Caco-2 (cell line): ENCODE measurements at regions of chr2 and their contacts with region 1.

Region 1: DNA sequence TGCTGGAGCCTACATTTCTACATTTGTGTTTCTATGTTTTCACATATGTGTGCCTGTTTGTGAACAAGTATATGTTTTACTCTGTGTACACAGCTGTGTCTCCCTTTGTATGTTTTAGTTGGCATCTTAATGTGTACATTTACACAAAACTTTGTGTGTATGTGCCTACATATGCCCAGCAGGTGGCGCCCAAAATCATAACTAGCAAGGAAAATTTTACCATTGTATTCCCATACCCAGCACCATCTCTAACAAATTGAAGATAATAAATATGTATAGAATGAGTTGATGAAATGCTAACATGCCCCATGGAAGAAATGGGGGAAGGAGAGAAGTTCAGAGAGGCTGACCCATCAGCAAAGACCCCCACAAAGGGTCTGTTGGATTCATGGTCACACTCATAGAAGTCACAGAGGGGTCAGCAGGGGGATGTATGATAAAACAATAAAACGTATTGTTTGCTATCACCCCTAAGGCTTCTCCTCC is 48.1 kb downstream of the PKDCC start:
- DNase-seq: peak; percentile 74
- H3K4me3 ChIP-seq: no peak overlapping the region
- H3K4me3 Mint-ChIP-seq: no peak overlapping the region
- H3K27ac Mint-ChIP-seq: no peak overlapping the region
- H3K4me1 ChIP-seq: peaks cover 36% of the 10 kb centered on the region
- H3K4me1 Mint-ChIP-seq: peaks cover 43% of the 10 kb centered on the region
- H3K27me3 ChIP-seq: no peaks in the 10 kb centered on the region
- H3K27me3 Mint-ChIP-seq: no peaks in the 10 kb centered on the region
- CTCF ChIP-seq: peak; percentile 77 to 91

Region 2: DNA sequence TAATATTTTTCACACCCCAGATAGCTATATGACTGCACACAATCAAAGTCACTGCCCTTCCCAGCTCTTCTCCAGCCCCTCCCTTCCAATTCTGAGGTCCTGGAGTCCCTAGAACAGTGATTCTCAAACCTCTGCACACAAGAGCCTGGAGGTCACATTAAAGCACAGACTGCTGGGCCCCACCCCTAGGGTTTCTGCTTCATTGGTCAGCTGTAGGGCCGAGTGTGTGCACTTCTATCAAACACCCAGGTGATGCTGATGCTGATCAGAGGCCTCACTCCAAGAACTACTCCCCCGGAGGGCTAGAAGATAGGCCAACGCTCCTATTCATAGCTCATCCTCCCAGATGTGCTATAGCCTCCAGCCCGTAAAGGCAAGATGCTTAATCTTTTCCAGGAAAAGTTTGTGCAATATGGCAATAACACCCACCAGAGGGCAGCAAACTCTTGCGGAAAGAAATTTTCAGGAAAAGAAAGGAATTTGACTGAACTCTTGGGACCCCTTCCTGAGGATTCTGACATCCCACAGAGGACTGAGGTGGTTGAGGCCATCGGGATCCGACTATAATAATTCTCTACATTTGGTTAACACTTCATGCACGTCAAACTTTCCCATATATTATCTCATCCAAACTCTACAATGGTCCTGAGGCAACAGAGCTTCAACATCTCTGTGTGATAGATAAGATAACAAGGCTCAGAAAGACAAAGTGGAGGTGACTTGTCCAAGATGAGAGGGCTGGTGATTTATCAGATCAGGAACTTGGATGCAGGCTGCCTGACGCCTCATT is 242.3 kb before region 1 on chr2:
- CTCF ChIA-PET with region 1: interaction called, 15 read pairs
- POLR2A ChIA-PET with region 1: no interaction called
- intact Hi-C with region 1: no loop called
- DNase-seq: peak; percentile 70 to 78
- H3K4me3 ChIP-seq: no peak overlapping the region
- H3K4me3 Mint-ChIP-seq: no peak overlapping the region
- H3K27ac Mint-ChIP-seq: peak overlapping the region; percentile 8
- H3K4me1 ChIP-seq: peaks cover 15% of the 10 kb centered on the region
- H3K4me1 Mint-ChIP-seq: peaks cover 2% of the 10 kb centered on the region
- H3K27me3 ChIP-seq: no peaks in the 10 kb centered on the region
- H3K27me3 Mint-ChIP-seq: no peaks in the 10 kb centered on the region
- CTCF ChIP-seq: peak; percentile 82 to 94

Region 3: GRCh38 chr2:42153944-42154581 is 58.1 kb after region 1 on chr2:
- CTCF ChIA-PET with region 1: no interaction called
- POLR2A ChIA-PET with region 1: no interaction called
- intact Hi-C with region 1: no loop called
- DNase-seq: no peak
- H3K4me3 ChIP-seq: no peak overlapping the region
- H3K4me3 Mint-ChIP-seq: no peak overlapping the region
- H3K27ac Mint-ChIP-seq: no peak overlapping the region
- H3K4me1 ChIP-seq: 0 out of 2 replicates have a peak, but pooled peaks cover 4% of the 10 kb centered on the region
- H3K4me1 Mint-ChIP-seq: no peaks in the 10 kb centered on the region
- H3K27me3 ChIP-seq: no peaks in the 10 kb centered on the region; the same call in 1 of the 2 replicates
- H3K27me3 Mint-ChIP-seq: no peaks in the 10 kb centered on the region
- CTCF ChIP-seq: no peak

Region 4: DNA sequence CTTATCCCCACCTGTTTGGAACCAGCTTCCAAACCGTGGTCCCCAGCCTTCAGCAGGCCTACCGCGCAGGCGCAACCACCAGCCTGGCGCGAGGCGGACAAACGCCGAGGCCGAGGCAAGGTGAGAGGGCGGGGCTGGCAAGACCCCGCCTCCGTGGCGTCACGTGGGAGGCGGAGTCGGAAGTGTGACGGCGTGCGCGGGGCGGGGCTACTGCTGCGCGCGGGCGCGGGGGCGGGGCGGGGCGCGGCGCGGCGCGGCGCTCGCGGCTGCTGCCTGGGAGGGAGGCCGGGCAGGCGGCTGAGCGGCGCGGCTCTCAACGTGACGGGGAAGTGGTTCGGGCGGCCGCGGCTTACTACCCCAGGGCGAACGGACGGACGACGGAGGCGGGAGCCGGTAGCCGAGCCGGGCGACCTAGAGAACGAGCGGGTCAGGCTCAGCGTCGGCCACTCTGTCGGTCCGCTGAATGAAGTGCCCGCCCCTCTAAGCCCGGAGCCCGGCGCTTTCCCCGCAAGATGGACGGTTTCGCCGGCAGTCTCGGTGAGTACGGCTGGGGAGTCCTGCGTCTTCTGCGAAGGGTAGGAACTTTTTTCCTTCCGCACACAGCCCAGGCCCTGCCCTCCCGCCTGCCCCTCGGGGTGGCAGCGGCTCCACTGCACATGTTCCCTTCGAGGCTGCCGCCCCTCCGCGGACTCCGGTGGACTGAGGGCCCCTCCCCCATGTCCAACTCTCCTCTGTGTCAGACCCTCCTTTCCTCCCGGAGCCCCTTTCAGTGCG is 73.3 kb after region 1 on chr2 and contains the start of gene EML4:
- CTCF ChIA-PET with region 1: no interaction called
- POLR2A ChIA-PET with region 1: no interaction called
- intact Hi-C with region 1: loop called (anchors 1 kb)
- DNase-seq: peak; percentile 94 to 97
- H3K4me3 ChIP-seq: peak within 1 kb of the TSS; percentile 89
- H3K4me3 Mint-ChIP-seq: no peak within 1 kb of the TSS
- H3K27ac Mint-ChIP-seq: peak within 1 kb of the TSS; percentile 39
- H3K4me1 ChIP-seq: peaks cover 29% of the 10 kb centered on the region
- H3K4me1 Mint-ChIP-seq: peaks cover 24% of the 10 kb centered on the region
- H3K27me3 ChIP-seq: no peaks in the 10 kb centered on the region
- H3K27me3 Mint-ChIP-seq: no peaks in the 10 kb centered on the region
- CTCF ChIP-seq: no peak
- total RNA-seq, gene EML4: 122 and 125 TPM in 2 replicates

Region 5: DNA sequence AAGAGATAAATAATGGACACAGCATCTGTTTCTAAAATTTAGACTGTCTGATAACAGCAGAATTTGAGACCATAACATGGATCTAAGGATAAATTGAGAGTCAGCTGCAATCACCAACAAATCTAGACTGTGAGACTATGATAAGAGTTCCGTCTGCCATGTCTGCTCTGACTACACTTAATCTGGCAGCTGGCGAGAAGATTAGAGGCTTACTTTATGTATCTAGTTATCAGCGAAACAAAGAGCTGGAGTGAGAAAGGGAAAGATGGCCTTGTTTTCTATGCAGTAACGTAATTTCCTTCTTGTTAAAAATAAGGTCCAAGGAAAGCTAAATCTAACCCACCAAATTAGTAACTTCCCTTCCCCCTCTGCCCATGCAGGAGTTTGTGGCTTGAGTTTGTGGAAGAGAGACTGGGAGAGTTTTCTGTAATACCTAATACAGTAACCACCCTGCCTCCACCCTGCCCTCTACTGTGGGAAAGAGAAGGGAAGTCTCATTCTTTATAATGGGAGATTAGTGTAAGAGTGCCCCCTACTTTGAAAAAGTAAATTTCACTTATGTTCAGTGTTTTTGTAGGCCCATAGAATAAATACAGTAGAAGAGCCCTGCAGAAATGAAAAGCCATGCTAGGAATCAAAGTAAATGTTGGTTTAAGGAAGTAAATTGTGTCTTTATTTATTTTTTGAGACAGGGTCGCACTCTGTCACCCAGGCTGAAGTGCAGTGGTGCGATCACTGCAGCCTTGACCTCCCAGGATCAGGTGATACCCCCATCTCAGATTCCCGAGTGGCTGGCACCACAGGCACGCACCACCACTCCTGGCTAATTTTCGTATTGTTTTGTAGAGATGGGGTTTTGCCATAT is 100.7 kb after region 1 on chr2:
- CTCF ChIA-PET with region 1: interaction called, 8 read pairs
- POLR2A ChIA-PET with region 1: no interaction called
- intact Hi-C with region 1: loop called (anchors 1 kb)
- DNase-seq: peak; percentile 68 to 77
- H3K4me3 ChIP-seq: no peak overlapping the region
- H3K4me3 Mint-ChIP-seq: peak overlapping the region; percentile 7
- H3K27ac Mint-ChIP-seq: peak overlapping the region; percentile 10
- H3K4me1 ChIP-seq: peaks cover 51% of the 10 kb centered on the region
- H3K4me1 Mint-ChIP-seq: peaks cover 56% of the 10 kb centered on the region
- H3K27me3 ChIP-seq: no peaks in the 10 kb centered on the region
- H3K27me3 Mint-ChIP-seq: no peaks in the 10 kb centered on the region
- CTCF ChIP-seq: peak; percentile 65 to 85

Region 6: DNA sequence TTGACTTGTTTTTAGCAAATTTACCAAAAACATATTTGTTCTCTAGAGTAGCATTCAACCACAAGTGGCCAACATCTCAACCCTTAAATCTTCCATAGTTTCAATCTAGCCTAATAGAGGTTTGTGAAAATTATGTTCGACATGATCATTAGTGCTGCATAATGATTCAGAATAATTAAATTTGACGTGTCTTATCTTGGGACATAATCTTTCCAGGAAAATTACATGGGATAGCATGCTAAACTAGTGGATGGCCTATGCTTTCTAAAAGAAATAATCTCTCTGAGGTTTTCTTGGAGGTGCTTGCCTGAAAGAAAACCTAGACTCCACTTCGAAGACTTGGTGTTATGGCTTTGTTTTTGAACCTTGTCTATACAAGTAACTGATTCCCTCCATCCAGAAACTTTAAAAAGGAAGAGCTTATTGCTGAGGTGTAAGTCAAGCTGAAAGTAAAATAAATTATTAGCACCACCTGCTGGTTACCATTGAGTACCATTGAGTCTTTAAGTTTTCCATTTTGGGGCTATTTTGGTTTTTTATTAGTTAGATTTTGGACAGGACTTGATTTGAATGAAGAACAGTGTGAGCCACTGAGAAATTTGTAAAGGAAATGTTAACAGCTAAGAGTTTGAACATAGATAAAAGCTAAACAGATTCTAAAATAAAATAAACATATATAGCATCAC is 232.3 kb after region 1 on chr2:
- CTCF ChIA-PET with region 1: interaction called, 7 read pairs
- POLR2A ChIA-PET with region 1: no interaction called
- intact Hi-C with region 1: loop called (anchors 2 kb)
- DNase-seq: no peak
- H3K4me3 ChIP-seq: no peak overlapping the region
- H3K4me3 Mint-ChIP-seq: no peak overlapping the region
- H3K27ac Mint-ChIP-seq: no peak overlapping the region
- H3K4me1 ChIP-seq: no peaks in the 10 kb centered on the region
- H3K4me1 Mint-ChIP-seq: no peaks in the 10 kb centered on the region
- H3K27me3 ChIP-seq: no peaks in the 10 kb centered on the region
- H3K27me3 Mint-ChIP-seq: no peaks in the 10 kb centered on the region
- CTCF ChIP-seq: peak in 1 of 2 experiments; percentile 21